Mammary epithelial cell (primary cell): ENCODE measurements at regions of chr7 and their contacts with region 1.

Region 1: DNA sequence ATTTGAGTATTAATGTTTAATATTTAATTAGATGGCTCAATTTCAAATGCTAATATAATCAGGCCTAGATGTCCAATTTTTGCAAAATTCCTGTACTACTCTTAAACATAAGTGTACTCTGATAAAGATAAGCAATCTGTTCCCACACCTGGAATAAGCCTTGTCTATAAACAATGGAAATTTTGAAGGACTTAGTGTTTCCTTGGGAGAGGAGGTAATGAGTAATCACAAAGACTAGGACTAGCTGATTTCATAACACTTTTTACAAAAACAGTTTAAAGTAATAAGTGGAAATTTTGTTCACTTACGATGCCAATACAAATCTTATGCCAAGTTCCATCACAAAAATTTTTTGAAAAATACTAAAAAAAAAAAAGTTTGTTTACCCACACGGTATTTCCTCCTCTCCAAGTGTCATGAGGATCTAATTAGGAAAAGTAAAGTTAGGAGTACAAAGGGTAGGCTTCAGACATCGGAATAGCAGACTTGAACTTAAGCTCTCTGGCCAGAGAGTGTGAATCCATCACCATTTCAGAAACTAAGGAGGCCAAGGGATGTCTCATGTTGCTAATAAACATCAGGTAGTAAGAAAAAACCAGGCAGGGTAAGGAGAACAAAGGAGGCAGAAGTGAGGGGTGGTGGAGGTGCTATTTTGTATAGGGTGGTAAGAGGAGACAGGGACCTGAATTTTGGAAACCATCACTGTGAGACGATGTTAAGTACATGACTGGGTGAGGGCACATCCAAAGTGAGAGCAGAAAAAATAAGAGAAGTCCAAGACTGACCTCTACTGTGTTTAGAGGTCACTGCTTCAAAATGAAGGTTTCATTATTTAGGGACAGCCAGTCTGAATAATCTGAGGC is 61.3 kb downstream of the RAPGEF5 start:
- DNase-seq: peak; percentile 15
- H3K4me3 ChIP-seq: no peak overlapping the region
- H3K27ac ChIP-seq: no peak overlapping the region
- H3K4me1 ChIP-seq: no peaks in the 10 kb centered on the region
- H3K27me3 ChIP-seq: no peaks in the 10 kb centered on the region
- CTCF ChIP-seq: no peak

Region 2: DNA sequence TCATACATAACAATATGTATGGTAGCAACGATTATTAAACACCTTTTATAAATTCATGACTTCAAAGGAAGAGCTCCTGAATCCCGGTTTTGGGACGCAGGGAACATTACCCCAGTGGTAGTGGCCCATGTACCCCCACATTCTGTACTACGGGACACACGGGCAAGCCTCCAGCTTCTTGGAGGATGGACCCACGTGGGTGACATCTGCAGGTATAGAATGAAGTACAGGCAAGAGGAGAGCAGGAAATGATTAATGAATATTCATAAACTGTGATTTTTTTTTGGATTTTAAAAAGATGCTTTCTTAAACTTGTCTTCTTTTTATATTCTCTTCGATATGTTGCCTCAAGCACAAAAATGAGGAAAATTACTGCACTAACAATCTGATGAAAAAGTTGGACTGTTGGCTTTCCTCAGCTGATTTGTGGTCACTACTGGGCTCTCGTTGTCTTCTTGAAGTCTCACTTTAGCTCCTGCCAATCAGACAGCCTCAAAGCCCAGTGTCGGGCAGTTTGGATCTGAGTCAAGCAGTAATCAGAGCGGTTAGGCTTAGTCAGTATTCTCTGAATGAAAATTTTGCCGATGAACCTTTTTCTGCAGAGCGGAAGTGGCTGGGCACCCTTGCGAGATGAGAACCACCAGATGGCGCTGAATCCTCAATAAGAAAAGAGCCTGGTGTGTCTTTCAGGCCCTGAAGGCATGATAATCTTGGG is 192.2 kb before region 1 on chr7:
- CTCF ChIA-PET with region 1: no interaction called
- dilution Hi-C with region 1: no loop called
- in situ Hi-C with region 1: loop called in 1 of 2 experiments (anchors 10 kb)
- intact Hi-C with region 1: no loop called
- DNase-seq: peak; percentile 87
- H3K4me3 ChIP-seq: no peak overlapping the region
- H3K27ac ChIP-seq: no peak overlapping the region
- H3K4me1 ChIP-seq: no peaks in the 10 kb centered on the region
- H3K27me3 ChIP-seq: no peaks in the 10 kb centered on the region
- CTCF ChIP-seq: peak; percentile 62 to 81

Region 3: GRCh38 chr7:22110227-22110839 is 185.3 kb before region 1 on chr7:
- CTCF ChIA-PET with region 1: no interaction called
- dilution Hi-C with region 1: no loop called
- in situ Hi-C with region 1: loop called in 1 of 2 experiments (anchors 10 kb)
- intact Hi-C with region 1: loop called (anchors 1 kb)
- DNase-seq: peak; percentile 66
- H3K4me3 ChIP-seq: no peak overlapping the region
- H3K27ac ChIP-seq: no peak overlapping the region
- H3K4me1 ChIP-seq: no peaks in the 10 kb centered on the region
- H3K27me3 ChIP-seq: no peaks in the 10 kb centered on the region
- CTCF ChIP-seq: peak; percentile 79 to 86

Region 4: GRCh38 chr7:22380333-22380732 is 84.7 kb after region 1 on chr7:
- CTCF ChIA-PET with region 1: no interaction called
- dilution Hi-C with region 1: no loop called
- in situ Hi-C with region 1: no loop called
- intact Hi-C with region 1: no loop called
- DNase-seq: no peak
- H3K4me3 ChIP-seq: no peak overlapping the region
- H3K27ac ChIP-seq: no peak overlapping the region
- H3K4me1 ChIP-seq: no peaks in the 10 kb centered on the region
- H3K27me3 ChIP-seq: no peaks in the 10 kb centered on the region
- CTCF ChIP-seq: no peak